ENCODE measurements at regions of chr2 and their contacts with region 1.

Region 1: DNA sequence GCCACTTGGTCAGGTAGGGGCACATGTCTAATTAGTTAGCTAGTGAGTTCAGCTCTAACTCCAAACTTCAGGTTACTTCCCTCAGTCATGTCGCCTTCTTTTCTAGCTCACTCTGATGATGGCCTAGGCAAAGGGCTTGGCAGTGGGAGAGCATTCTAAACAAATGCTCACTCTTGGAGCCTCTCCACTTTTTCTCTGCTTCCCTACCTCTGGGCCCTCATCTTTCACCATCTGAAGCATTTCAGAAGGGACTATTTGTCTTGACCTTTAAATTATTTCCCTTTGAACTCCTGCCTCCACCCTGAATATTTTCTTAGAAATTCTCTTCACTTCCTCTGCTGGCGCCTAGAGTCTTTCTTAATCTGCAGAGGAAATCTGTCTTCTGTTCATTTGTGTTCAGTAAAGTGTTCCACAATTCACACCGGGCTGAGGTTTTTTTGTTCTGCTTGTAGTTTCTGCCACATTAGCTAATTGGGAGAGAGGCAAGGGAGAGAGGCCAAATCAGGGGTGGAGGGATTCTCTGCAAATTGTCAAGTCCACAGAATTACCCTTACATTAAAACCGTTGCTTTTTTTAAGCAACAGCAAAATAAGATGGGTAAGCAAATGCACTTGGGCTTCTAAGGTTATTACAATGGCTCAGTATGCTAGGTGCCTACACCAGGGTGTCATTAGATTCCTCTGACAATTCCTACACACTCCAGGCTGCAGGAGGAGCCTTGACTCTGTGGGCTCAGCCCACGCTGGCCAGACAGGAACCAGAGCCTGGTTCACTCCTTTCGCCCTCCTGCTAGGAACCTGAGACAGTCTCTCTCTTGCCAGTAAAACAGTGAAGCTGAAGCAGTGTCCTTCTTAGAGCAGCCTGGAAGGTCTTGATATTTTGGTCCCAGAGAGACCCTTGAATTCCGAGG is 5.5 kb downstream of the MSGN1 start:
- DNase-seq: no peak
- ATAC-seq: peak; percentile 41 to 73 (median 58)
- H3K4me3 ChIP-seq: no peak overlapping the region
- H3K27ac ChIP-seq: peak overlapping the region; percentile 50 to 90 (median 78)
- H3K4me1 ChIP-seq: peaks cover 8 to 37% (median 33%) of the 10 kb centered on the region in 12 donors
- H3K27me3 ChIP-seq: no peaks in the 10 kb centered on the region
- CTCF ChIP-seq: no peak
- POLR2A ChIP-seq: no peak

Region 2: DNA sequence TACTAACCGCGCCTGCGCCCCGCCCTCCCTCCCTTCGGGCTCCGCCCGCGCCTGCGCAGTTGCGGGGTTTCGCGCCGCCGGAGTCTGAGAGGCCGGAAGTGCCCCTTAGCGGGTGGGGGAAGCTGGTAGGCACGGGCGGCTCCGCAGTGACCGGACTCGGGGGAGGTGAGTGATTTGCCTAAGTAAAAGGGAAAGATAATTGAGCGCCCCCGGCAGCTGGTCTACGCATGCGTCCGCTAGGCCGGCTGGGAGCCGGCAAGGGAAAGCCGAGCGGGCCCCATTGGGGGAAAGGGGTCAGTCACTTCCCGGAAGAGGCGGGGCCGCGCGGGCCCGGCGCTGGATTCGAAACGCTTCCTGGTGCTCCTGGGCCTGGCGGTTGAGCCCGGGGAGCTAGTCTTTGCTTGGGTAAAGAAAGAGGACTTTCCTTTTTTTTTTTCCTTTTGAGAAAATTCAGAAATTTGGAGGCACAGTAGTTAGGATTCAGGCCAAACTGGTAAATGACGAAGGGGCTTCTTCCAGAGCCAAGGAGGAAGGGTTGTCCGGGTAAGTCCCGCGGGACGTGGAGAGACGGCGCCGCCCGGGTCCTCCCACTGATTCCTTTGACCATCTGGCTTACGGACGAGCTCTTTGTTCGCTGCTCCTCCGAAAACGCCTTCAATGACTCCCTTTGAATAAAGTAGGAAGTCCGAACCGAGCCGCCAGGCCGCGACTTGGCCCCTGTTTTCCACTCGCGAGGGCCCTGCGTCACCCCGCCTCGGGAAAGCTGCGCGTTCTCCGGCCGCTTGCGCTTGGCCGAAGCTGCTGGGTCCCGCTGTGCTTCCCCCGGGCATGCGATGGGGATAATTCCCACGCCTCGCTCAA is 67.8 kb before region 1 on chr2 and contains the starts of genes GEN1 and SMC6:
- intact Hi-C with region 1: loop called in 4 of 10 experiments (anchors 5 to 10 kb)
- DNase-seq: peak; percentile 90 to 96 (median 92)
- ATAC-seq: peak; percentile 97 to 98 (median 98)
- H3K4me3 ChIP-seq: peak within 1 kb of the TSS; percentile 71 to 100 (median 94)
- H3K27ac ChIP-seq: peak within 1 kb of the TSS; percentile 85 to 99 (median 98)
- H3K4me1 ChIP-seq: peaks cover 0 to 61% (median 29%) of the 10 kb centered on the region in 12 donors
- H3K27me3 ChIP-seq: no peaks in the 10 kb centered on the region
- CTCF ChIP-seq: no peak
- POLR2A ChIP-seq: peak in 1 of 2 donors; percentile 4
- total RNA-seq, gene GEN1: 2.4 to 8.8 (median 3.1) TPM
- total RNA-seq, gene SMC6: 10.1 to 14.7 (median 12.7) TPM

Region 3: DNA sequence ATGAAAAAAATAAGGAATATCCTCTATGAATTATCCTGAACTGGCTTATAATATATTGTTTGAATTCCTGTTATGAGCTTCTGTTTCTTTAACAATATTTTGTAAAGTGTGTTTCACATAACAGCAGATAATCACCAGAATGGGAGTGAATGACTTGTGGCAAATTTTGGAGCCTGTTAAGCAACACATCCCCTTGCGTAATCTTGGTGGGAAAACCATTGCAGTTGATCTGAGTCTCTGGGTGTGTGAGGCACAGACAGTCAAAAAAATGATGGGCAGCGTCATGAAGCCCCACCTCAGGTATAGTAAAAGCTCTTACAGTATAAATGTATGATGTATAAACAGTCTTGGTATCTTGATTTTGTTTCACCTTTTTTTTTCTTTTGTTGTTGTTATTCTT is 62.0 kb before region 1 on chr2:
- intact Hi-C with region 1: loop called in 3 of 10 experiments (anchors 10 kb)
- DNase-seq: no peak
- ATAC-seq: no peak
- H3K4me3 ChIP-seq: no peak overlapping the region
- H3K27ac ChIP-seq: no peak overlapping the region
- H3K4me1 ChIP-seq: peaks cover 0 to 35% (median 13%) of the 10 kb centered on the region in 12 donors
- H3K27me3 ChIP-seq: no peaks in the 10 kb centered on the region
- CTCF ChIP-seq: no peak
- POLR2A ChIP-seq: no peak

Region 4: GRCh38 chr2:17800219-17800618 is 21.6 kb before region 1 on chr2:
- intact Hi-C with region 1: loop called in 1 of 10 experiments (anchors 2 kb)
- DNase-seq: peak in 2 of 5 donors; percentile 36 to 37
- ATAC-seq: peak; percentile 81 to 93 (median 90)
- H3K4me3 ChIP-seq: peak overlapping the region in 1 of 12 donors; percentile 6
- H3K27ac ChIP-seq: peak overlapping the region in 1 of 12 donors; percentile 61
- H3K4me1 ChIP-seq: peaks cover 0 to 21% (median 11%) of the 10 kb centered on the region in 12 donors
- H3K27me3 ChIP-seq: no peaks in the 10 kb centered on the region
- CTCF ChIP-seq: no peak
- POLR2A ChIP-seq: no peak

Region 5: GRCh38 chr2:17851731-17852585 is 30.2 kb after region 1 on chr2:
- intact Hi-C with region 1: no loop called
- DNase-seq: peak in 4 of 5 donors; percentile 33 to 58 (median 47)
- ATAC-seq: peak; percentile 49 to 84 (median 73)
- H3K4me3 ChIP-seq: no peak overlapping the region
- H3K27ac ChIP-seq: no peak overlapping the region
- H3K4me1 ChIP-seq: peaks cover 0 to 6% (median 0%) of the 10 kb centered on the region in 12 donors
- H3K27me3 ChIP-seq: peaks cover 0 to 5% (median 0%) of the 10 kb centered on the region in 9 donors
- CTCF ChIP-seq: peak; percentile 72 to 90 (median 88)
- POLR2A ChIP-seq: no peak

Region 6: GRCh38 chr2:17879101-17879912 is 57.5 kb after region 1 on chr2:
- intact Hi-C with region 1: no loop called
- DNase-seq: peak; percentile 72 to 81 (median 74)
- ATAC-seq: peak; percentile 53 to 82 (median 80)
- H3K4me3 ChIP-seq: peak overlapping the region; percentile 65 to 88 (median 72)
- H3K27ac ChIP-seq: peak overlapping the region in 10 of 12 donors; percentile 40 to 76 (median 64)
- H3K4me1 ChIP-seq: peaks cover 0 to 23% (median 13%) of the 10 kb centered on the region in 12 donors
- H3K27me3 ChIP-seq: peaks cover 0 to 55% (median 14%) of the 10 kb centered on the region in 9 donors
- CTCF ChIP-seq: peak in 4 of 12 donors; percentile 9 to 52 (median 34)
- POLR2A ChIP-seq: no peak